Spleen (tissue), 13 donors: ENCODE measurements at regions of chr3 and their contacts with region 1.

Region 1: DNA sequence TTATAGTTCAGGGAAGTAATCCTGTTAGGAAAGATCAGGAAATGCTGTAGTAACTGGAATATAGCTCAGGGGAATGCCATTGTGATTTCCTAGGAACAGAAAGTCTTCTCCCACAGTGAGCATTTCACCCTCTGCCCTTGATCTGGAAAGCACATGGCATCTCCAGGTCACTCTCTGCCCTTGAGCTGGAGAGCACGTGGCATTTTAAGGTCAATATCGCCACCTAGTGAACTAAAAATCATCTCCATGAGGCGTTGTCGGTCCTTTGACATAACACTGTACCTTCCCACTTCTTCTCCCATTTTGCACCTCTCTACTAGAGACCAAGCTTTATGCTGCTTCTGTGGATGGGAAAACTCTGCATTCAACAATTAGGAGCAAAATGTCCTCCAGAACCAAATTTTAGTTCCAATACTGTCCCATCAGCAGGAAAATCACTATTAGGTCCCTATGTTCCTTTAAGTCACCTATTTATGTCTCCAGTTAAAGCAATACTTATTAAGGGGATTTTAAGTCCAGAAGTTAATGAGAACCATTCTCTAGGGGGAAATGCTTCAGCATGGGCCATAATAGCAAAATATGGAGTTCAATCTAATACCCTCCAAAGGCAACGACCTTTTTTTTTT is 54.7 kb upstream of the GK5 start:
- DNase-seq: no peak
- H3K4me3 ChIP-seq: no peak overlapping the region
- H3K27ac ChIP-seq: no peak overlapping the region
- H3K4me1 ChIP-seq: peaks cover 0 to 36% (median 14%) of the 10 kb centered on the region in 6 donors
- H3K27me3 ChIP-seq: no peaks in the 10 kb centered on the region
- CTCF ChIP-seq: peak; percentile 33 to 76 (median 59)
- POLR2A ChIP-seq: no peak

Region 2: GRCh38 chr3:141959921-141960554 is 320.0 kb before region 1 on chr3:
- intact Hi-C with region 1: loop called (anchors 10 kb)
- DNase-seq: no peak
- H3K4me3 ChIP-seq: no peak overlapping the region
- H3K27ac ChIP-seq: peak overlapping the region in 1 of 8 donors; percentile 32
- H3K4me1 ChIP-seq: peaks cover 0 to 4% (median 0%) of the 10 kb centered on the region in 6 donors
- H3K27me3 ChIP-seq: no peaks in the 10 kb centered on the region
- CTCF ChIP-seq: no peak
- POLR2A ChIP-seq: no peak

Region 3: DNA sequence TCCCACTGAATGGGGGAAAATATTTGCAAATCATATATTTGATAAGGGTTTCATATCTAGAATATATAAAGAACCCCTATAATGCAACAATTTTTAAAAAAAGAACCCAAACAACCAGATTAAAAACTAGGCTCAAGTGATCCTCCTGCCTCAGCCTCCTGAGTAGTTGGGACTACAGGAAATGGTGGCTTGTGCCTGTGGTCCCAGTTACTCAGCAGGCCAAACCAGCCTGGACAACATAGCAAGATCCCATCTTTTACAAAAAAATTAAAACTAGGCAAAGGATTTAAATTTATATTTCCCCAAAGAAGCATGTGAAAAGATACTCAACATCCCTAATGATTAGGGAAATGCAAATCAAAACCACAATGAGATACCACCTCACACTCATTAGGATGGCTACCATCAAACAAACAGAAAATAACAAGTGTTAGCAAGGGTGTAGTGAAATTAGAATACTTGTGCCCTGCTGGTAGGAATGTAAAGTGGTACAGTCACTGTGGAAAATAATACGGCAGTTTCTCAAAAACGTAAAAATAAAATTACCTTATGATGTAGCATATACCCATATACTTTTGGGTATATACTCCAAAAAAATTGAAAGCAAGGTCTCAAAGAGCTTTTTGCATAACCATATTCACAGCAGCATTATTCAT is 150.4 kb before region 1 on chr3:
- intact Hi-C with region 1: loop called (anchors 5 kb)
- DNase-seq: no peak
- H3K4me3 ChIP-seq: no peak overlapping the region
- H3K27ac ChIP-seq: no peak overlapping the region
- H3K4me1 ChIP-seq: peaks cover 0 to 5% (median 0%) of the 10 kb centered on the region in 6 donors
- H3K27me3 ChIP-seq: no peaks in the 10 kb centered on the region
- CTCF ChIP-seq: no peak
- POLR2A ChIP-seq: no peak

Region 4: DNA sequence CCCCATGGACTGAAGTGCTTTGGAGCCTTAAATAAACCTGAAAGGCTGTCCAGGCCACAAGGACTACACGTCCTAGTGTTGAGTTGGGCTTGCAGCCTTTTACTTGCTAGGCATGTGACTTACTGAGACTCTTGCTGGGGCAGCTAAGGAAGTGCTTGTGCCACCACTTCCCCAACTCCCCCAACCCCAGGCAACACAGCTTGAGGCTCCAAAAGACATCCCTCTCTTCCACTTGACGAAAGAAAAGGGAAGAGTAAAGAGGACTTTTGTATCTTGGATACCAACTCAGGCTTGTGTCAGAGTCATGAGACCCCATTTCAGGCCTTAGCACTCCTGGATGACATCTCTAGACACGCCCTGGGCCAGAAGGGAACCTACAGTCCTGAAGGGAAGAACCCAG is 57.9 kb after region 1 on chr3:
- intact Hi-C with region 1: no loop called
- DNase-seq: no peak
- H3K4me3 ChIP-seq: no peak overlapping the region
- H3K27ac ChIP-seq: peak overlapping the region in 2 of 8 donors; percentile 12 to 23
- H3K4me1 ChIP-seq: peaks cover 0 to 7% (median 0%) of the 10 kb centered on the region in 6 donors
- H3K27me3 ChIP-seq: no peaks in the 10 kb centered on the region
- CTCF ChIP-seq: no peak
- POLR2A ChIP-seq: no peak

Region 5: DNA sequence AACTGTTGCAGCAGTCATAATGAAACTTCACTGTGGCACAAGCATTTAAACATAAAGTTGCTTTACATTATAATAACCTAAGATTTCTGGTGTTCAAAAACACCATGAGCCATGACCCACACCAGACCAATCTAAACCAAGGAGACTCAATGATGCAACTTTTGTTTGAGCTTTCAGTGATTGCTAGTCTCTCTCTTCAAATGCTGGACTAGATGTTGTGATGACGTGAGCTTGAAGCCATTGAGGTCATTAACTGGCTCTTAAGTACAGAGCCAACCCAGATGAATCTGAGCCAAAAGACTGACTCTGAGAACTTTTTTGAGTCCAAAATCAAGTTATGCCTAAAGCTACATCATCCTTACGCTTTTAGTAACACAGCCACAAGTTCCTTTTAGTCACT is 262.0 kb after region 1 on chr3:
- intact Hi-C with region 1: no loop called
- DNase-seq: no peak
- H3K4me3 ChIP-seq: no peak overlapping the region
- H3K27ac ChIP-seq: no peak overlapping the region
- H3K4me1 ChIP-seq: no peaks in the 10 kb centered on the region
- H3K27me3 ChIP-seq: no peaks in the 10 kb centered on the region
- CTCF ChIP-seq: no peak
- POLR2A ChIP-seq: no peak

Region 6: DNA sequence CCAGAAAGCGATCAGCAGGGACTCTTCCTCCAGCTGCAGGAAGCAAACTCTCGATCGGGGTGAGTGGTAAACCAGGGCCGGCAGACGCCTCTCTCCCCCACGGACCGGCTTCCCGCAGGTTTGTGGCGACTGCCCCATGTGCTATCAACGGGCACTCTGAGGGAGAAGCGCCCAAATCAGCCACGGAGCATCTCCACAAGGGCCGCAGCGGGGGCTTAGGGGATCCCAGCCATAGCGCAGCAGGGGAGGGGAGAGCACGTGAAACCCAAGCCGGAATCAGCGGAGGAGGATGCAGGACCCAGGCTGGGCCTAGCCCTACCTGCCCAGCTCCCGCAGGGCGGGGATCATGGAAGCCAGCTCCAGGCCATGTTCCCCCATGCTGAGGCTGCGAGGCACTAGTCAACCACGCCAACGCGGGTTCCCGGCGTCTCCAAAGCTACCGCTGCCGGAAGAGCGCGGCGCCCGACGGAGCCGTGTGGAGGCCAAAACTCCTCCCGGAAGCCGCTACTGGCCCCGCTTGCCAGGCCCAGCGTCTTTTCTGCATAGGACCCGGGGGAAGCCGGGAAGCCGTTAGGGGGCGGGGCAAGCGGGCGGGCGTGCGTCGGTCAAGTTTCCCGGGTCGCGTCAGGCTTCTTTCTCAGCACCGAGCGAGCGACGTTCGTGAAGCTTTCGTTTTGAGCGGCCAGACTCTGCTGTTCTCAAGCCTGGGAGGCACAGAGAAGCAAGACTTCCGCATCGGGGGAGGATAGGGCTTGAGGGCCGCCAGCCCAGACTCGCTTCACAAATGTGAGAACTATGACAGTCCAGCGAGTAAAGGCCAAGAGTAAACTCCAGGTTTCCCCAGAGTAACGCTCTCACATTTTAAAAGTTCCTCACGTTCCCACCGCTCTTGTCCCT is 298.5 kb after region 1 on chr3 and contains the start of gene ATR:
- intact Hi-C with region 1: no loop called
- DNase-seq: peak; percentile 99
- H3K4me3 ChIP-seq: peak within 1 kb of the TSS; percentile 81 to 97 (median 90)
- H3K27ac ChIP-seq: peak within 1 kb of the TSS; percentile 90 to 97 (median 94)
- H3K4me1 ChIP-seq: peaks cover 27 to 58% (median 46%) of the 10 kb centered on the region in 6 donors
- H3K27me3 ChIP-seq: no peaks in the 10 kb centered on the region
- CTCF ChIP-seq: peak in 6 of 11 experiments; percentile 1 to 43 (median 24)
- POLR2A ChIP-seq: peak; percentile 16 to 86 (median 17)
- total RNA-seq, gene ATR: 33.9 to 64.0 (median 39.2) TPM